ENCODE measurements at regions of chr11 and their contacts with region 1.

Region 1: GRCh38 chr11:35822815-35823495 is 120.9 kb upstream of the LDLRAD3 start:
- DNase-seq: no peak
- H3K4me3 ChIP-seq: no peak overlapping the region
- H3K27ac ChIP-seq: no peak overlapping the region
- H3K4me1 ChIP-seq: 0 out of 2 replicates have a peak, but pooled peaks cover 8% of the 10 kb centered on the region
- H3K27me3 ChIP-seq: no peaks in the 10 kb centered on the region
- CTCF ChIP-seq: no peak

Region 2: DNA sequence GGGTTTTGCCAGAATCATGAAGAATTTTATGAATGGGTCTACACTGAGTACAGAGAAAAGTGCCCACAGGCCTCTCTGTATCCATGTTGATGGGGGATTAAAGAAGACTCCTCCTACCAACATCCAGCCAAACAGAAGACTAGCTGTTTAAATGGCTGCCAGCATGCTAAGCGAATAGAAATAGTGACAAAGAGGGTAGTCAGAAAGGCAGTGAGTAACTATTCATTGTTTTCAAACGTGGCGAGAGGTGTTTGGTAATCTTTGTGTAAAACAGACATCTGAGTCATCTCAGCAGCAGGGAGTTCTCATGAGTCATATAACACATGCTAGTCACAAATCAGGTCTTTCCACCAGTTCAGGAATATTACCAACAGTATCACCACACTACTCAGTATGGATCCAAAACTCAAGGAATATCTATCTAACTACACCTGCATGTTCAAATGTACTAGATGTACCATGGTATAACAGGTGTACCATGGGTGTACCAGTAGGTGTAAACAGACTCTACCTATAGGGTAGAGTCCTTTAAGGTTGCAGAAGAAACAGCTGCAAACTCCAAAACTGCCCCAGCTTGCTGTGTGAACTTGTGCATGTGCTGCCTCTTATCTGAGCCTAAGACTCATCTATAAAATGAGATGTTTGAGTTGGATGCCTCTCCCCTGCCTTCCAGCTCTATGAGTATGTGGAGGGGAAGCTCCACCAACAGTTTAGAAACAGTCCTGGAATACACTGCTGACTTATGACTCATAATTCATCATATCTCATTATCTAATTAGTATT is 485.6 kb before region 1 on chr11:
- CTCF ChIA-PET with region 1: no interaction called
- POLR2A ChIA-PET with region 1: no interaction called
- intact Hi-C with region 1: no loop called
- DNase-seq: peak; percentile 56 to 99
- H3K4me3 ChIP-seq: no peak overlapping the region
- H3K27ac ChIP-seq: peak overlapping the region; percentile 92
- H3K4me1 ChIP-seq: peaks cover 33% of the 10 kb centered on the region
- H3K27me3 ChIP-seq: no peaks in the 10 kb centered on the region
- CTCF ChIP-seq: no peak

Region 3: GRCh38 chr11:35662649-35663407 is 160.1 kb before region 1 on chr11 and contains the start of gene TRIM44:
- CTCF ChIA-PET with region 1: interaction called, 8 read pairs
- POLR2A ChIA-PET with region 1: no interaction called
- intact Hi-C with region 1: loop called (anchors 1 kb)
- DNase-seq: peak; percentile 81 to 89
- H3K4me3 ChIP-seq: peak within 1 kb of the TSS; percentile 88
- H3K27ac ChIP-seq: peak within 1 kb of the TSS; percentile 89
- H3K4me1 ChIP-seq: peaks cover 47% of the 10 kb centered on the region
- H3K27me3 ChIP-seq: no peaks in the 10 kb centered on the region
- CTCF ChIP-seq: no peak
- total RNA-seq, gene TRIM44: 91.7 and 100 TPM in 2 replicates

Region 4: DNA sequence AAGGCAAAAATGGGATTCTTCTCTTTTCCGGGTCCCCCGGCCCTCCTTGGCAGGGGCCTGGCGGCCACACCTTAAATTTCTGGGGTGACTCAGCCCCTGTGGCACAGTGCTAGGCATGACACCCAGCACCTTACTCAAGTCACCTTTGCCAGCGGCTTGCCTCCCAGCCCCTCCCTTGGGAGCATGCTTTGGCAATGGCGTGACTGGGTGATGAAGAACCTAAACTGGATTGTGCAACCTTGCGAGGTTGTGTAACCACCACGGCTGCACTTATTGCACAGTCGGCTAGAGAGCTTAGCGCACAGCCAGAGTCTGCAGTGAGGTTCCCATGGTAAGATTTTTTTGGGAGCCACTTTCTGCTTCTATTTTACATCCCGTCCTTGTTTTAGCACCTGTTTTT is 104.8 kb after region 1 on chr11:
- CTCF ChIA-PET with region 1: interaction called, 19 read pairs
- POLR2A ChIA-PET with region 1: no interaction called
- intact Hi-C with region 1: loop called (anchors 5 kb)
- DNase-seq: peak; percentile 95 to 99
- H3K4me3 ChIP-seq: peak overlapping the region; percentile 47; the same call in 1 of the 2 replicates
- H3K27ac ChIP-seq: peak overlapping the region; percentile 91
- H3K4me1 ChIP-seq: peaks cover 37% of the 10 kb centered on the region
- H3K27me3 ChIP-seq: no peaks in the 10 kb centered on the region
- CTCF ChIP-seq: no peak

Region 5: DNA sequence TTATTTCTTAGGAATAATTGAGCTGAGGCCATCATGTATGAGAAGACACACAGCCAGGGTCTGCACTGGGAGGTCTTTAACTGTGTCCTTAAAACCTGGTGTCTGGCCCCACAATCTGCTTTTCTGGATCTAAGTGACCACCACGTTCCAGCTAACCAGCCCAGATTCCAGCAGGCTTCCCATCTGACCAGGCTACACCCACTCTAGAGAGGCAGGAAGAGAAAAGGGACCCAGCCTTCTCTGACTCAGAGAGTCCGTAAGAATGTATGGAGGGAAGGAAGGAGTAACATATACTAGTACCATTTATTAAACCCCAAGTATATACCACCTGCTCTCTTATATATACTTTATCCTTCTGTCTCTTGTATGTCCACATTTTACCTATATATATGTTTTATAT is 201.0 kb after region 1 on chr11:
- CTCF ChIA-PET with region 1: interaction called, 12 read pairs
- POLR2A ChIA-PET with region 1: no interaction called
- intact Hi-C with region 1: no loop called
- DNase-seq: peak in 1 of 2 experiments; percentile 32
- H3K4me3 ChIP-seq: no peak overlapping the region
- H3K27ac ChIP-seq: no peak overlapping the region
- H3K4me1 ChIP-seq: peaks cover 9% of the 10 kb centered on the region; the same call in 1 of the 2 replicates
- H3K27me3 ChIP-seq: no peaks in the 10 kb centered on the region
- CTCF ChIP-seq: no peak

Region 6: GRCh38 chr11:36069576-36070212 is 246.7 kb after region 1 on chr11:
- CTCF ChIA-PET with region 1: interaction called, 11 read pairs
- POLR2A ChIA-PET with region 1: no interaction called
- intact Hi-C with region 1: no loop called
- DNase-seq: peak in 1 of 2 experiments; percentile 3
- H3K4me3 ChIP-seq: no peak overlapping the region
- H3K27ac ChIP-seq: no peak overlapping the region
- H3K4me1 ChIP-seq: no peaks in the 10 kb centered on the region
- H3K27me3 ChIP-seq: no peaks in the 10 kb centered on the region
- CTCF ChIP-seq: peak; percentile 46; the same call in 1 of the 2 replicates

Region 7: GRCh38 chr11:36258730-36259360 is 435.9 kb after region 1 on chr11:
- CTCF ChIA-PET with region 1: interaction called, 35 read pairs
- POLR2A ChIA-PET with region 1: no interaction called
- intact Hi-C with region 1: loop called (anchors 2 kb)
- DNase-seq: peak; percentile 35 to 44
- H3K4me3 ChIP-seq: no peak overlapping the region
- H3K27ac ChIP-seq: no peak overlapping the region
- H3K4me1 ChIP-seq: peaks cover 16% of the 10 kb centered on the region
- H3K27me3 ChIP-seq: no peaks in the 10 kb centered on the region
- CTCF ChIP-seq: peak; percentile 71

Region 8: GRCh38 chr11:36478700-36479329 is 655.9 kb after region 1 on chr11:
- CTCF ChIA-PET with region 1: interaction called, 16 read pairs
- POLR2A ChIA-PET with region 1: no interaction called
- intact Hi-C with region 1: no loop called
- DNase-seq: peak; percentile 47 to 51
- H3K4me3 ChIP-seq: no peak overlapping the region
- H3K27ac ChIP-seq: no peak overlapping the region
- H3K4me1 ChIP-seq: 0 out of 2 replicates have a peak, but pooled peaks cover 3% of the 10 kb centered on the region
- H3K27me3 ChIP-seq: no peaks in the 10 kb centered on the region
- CTCF ChIP-seq: peak; percentile 88